Posterior cingulate gyrus (tissue), 11 donors: ENCODE measurements at regions of chr3 and their contacts with region 1.

Region 1: GRCh38 chr3:69665026-69665737 is 74.1 kb upstream of the MITF start:
- DNase-seq: no peak

Region 2: DNA sequence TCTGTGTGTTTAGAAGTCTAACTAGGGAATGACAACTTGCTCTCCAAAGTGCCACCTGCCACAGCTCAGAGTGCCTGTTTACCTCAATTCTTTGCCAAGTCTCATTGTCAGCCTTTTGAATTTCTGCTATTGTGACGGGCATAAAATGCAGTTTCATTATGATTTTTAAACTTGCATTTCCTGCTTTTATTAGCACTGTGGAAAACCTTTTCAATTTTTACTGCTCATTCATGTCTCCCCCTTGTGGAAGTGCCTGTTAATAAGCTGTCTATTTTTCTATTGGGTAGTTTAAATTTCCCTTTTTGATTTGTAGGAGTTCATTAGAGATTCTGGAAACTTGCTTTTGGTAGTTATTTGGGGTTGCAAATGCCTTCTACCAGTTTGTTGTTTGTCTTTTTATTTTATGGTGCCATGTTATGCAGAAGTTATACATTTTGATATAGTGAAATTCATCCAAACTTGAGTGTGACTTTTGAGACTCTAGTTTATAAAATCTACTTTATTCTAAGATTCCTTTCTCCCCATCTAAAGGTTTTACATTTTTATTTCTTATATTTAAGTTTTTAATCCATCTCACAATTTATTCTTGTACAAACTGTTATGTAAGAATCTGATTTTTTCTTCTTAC is 225.4 kb before region 1 on chr3:
- intact Hi-C with region 1: loop called (anchors 10 kb)
- DNase-seq: no peak